ENCODE measurements at regions of chr22 and their contacts with region 1.

Region 1: DNA sequence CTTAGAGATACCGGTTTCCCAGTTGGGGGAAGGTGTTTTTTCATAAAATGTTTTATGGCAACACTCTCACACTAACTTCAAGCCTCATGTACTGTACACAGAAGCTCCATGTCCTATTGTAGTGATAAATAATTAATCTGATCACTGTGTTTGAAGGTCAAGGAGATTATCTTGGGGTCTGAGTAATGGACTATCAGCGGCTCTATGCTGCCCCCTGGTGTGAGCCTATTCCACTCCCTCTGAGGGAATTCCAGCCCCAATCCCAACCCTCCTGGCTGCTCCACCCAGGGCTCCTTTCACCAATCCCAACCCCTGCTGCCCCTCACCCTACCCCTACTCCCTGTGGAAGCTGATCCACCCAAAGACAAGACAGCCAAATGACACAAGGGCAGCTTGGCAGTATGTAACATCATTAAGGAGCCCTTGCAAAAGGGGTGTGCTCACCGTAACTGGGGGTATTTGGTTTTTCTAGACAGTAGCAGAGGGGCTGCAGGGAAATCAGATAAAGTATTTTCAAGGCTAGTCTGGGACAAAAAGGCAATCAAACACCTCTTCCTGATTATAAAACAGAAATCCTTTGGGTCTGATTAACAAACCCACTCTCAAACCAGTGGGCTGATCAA is 22.3 kb downstream of the HPS4 start:
- DNase-seq: peak; percentile 61
- ATAC-seq: no peak
- H3K4me3 ChIP-seq: no peak overlapping the region
- H3K4me3 Mint-ChIP-seq: no peak overlapping the region
- H3K27ac ChIP-seq: no peak overlapping the region
- H3K27ac Mint-ChIP-seq: no peak overlapping the region
- H3K4me1 ChIP-seq: no peaks in the 10 kb centered on the region
- H3K4me1 Mint-ChIP-seq: no peaks in the 10 kb centered on the region
- H3K27me3 ChIP-seq: no peaks in the 10 kb centered on the region
- H3K27me3 Mint-ChIP-seq: no peaks in the 10 kb centered on the region
- CTCF ChIP-seq: peak; percentile 81

Region 2: GRCh38 chr22:26377170-26377830 is 84.0 kb before region 1 on chr22:
- CTCF ChIA-PET with region 1: interaction called, 5 read pairs
- POLR2A ChIA-PET with region 1: no interaction called
- intact Hi-C with region 1: loop called (anchors 5 kb)
- DNase-seq: peak; percentile 24
- ATAC-seq: no peak
- H3K4me3 ChIP-seq: no peak overlapping the region
- H3K4me3 Mint-ChIP-seq: no peak overlapping the region
- H3K27ac ChIP-seq: no peak overlapping the region
- H3K27ac Mint-ChIP-seq: no peak overlapping the region
- H3K4me1 ChIP-seq: no peaks in the 10 kb centered on the region
- H3K4me1 Mint-ChIP-seq: peaks cover 4% of the 10 kb centered on the region
- H3K27me3 ChIP-seq: peaks cover 0 to 32% (median 19%) of the 10 kb centered on the region in 4 experiments
- H3K27me3 Mint-ChIP-seq: peaks cover 74% of the 10 kb centered on the region
- CTCF ChIP-seq: no peak

Region 3: DNA sequence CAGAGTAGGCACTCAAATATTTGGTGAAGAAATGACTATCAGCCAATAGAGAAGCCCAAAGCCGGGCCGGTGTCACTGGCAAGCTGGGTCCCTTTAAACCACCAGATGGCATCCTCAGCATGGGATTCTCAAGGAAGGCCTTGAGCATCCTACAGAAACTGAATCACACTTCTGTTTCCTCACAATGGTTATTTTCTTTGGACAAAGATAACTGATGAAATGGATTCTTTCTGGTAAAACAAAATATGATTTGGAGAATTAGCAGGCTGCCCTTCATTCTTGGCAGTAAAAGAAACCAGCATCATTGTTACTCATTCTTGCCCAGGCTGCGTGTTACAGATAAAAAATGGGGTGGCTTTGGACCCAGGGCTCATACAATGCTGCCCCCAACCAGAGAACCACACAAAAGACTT is 62.6 kb before region 1 on chr22:
- CTCF ChIA-PET with region 1: interaction called, 179 read pairs
- POLR2A ChIA-PET with region 1: no interaction called
- intact Hi-C with region 1: no loop called
- DNase-seq: peak; percentile 67
- ATAC-seq: peak; percentile 67
- H3K4me3 ChIP-seq: no peak overlapping the region
- H3K4me3 Mint-ChIP-seq: no peak overlapping the region
- H3K27ac ChIP-seq: no peak overlapping the region
- H3K27ac Mint-ChIP-seq: no peak overlapping the region
- H3K4me1 ChIP-seq: no peaks in the 10 kb centered on the region
- H3K4me1 Mint-ChIP-seq: no peaks in the 10 kb centered on the region
- H3K27me3 ChIP-seq: peaks cover 0 to 4% (median 0%) of the 10 kb centered on the region in 4 experiments
- H3K27me3 Mint-ChIP-seq: peaks cover 8% of the 10 kb centered on the region
- CTCF ChIP-seq: peak; percentile 76

Region 4: DNA sequence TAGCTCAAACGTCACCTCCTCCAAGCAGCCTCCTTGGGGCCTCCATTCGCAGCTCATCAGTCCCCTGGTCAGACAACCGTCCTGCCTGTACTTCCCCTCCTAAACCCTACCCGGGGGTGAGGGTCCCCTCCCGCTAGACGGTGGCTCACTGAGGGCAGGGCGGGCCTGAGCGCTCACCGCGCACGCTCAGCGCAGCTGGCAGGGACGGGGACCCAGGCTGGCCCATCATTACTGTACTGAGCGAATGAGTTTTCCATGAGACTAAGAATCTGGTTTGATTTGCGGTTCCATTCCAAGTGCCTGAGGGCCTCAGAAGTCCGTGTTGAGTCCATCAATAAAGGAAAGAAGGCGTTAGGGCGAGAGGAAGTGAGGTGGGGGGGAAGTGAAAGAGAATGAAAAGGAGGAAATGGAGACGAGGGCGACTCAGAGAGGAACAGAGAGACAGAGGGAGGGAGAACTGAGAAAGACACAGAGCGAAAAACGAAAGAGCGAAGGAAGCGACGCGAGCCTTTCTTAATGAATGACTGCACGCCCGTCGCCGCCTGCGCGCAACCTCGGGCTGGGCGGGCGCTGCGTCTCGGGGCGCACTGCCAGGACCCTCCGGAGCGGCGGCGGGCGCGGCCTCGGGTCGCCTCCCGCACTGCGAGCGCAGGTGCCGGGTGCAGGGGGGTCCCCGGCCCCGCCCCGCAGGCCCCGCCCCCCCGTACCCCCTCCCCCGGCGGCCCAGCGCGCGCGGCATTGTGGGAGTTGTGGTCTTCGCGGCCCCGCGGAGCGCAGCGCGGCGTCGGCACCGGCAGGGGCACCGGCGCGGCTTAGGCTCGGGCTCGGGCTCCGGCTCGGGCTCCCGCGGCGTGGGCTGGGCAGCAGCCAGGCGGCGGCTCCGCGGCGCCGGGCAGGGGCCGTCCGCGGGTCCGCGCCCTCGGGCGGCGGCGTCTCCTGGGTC is 32.5 kb before region 1 on chr22 and contains the start of gene ASPHD2:
- CTCF ChIA-PET with region 1: interaction called, 19 read pairs
- POLR2A ChIA-PET with region 1: no interaction called
- intact Hi-C with region 1: no loop called
- DNase-seq: peak; percentile 95
- ATAC-seq: peak; percentile 78
- H3K4me3 ChIP-seq: peak within 1 kb of the TSS; percentile 30 to 100 (median 82)
- H3K4me3 Mint-ChIP-seq: peak within 1 kb of the TSS; percentile 90
- H3K27ac ChIP-seq: peak within 1 kb of the TSS; percentile 88 to 98
- H3K27ac Mint-ChIP-seq: peak within 1 kb of the TSS; percentile 97
- H3K4me1 ChIP-seq: peaks cover 45 to 48% of the 10 kb centered on the region in 2 donors
- H3K4me1 Mint-ChIP-seq: peaks cover 55% of the 10 kb centered on the region
- H3K27me3 ChIP-seq: no peaks in the 10 kb centered on the region
- H3K27me3 Mint-ChIP-seq: no peaks in the 10 kb centered on the region
- CTCF ChIP-seq: no peak
- total RNA-seq, gene ASPHD2: 7.3 and 8.0 TPM in 2 replicates

Region 5: GRCh38 chr22:26483439-26484359 is 22.4 kb after region 1 on chr22 and contains the starts of genes HPS4 and SRRD:
- CTCF ChIA-PET with region 1: interaction called, 8 read pairs
- POLR2A ChIA-PET with region 1: interaction called, 7 read pairs
- intact Hi-C with region 1: loop called (anchors 2 kb)
- DNase-seq: peak; percentile 97
- ATAC-seq: peak; percentile 83
- H3K4me3 ChIP-seq: peak within 1 kb of the TSS; percentile 70 to 98 (median 83)
- H3K4me3 Mint-ChIP-seq: peak within 1 kb of the TSS; percentile 94
- H3K27ac ChIP-seq: peak within 1 kb of the TSS; percentile 90 to 98
- H3K27ac Mint-ChIP-seq: peak within 1 kb of the TSS; percentile 97
- H3K4me1 ChIP-seq: peaks cover 49 to 58% of the 10 kb centered on the region in 2 donors
- H3K4me1 Mint-ChIP-seq: peaks cover 69% of the 10 kb centered on the region
- H3K27me3 ChIP-seq: no peaks in the 10 kb centered on the region
- H3K27me3 Mint-ChIP-seq: no peaks in the 10 kb centered on the region
- CTCF ChIP-seq: no peak
- total RNA-seq, gene HPS4: 61.8 and 76.6 TPM in 2 replicates
- total RNA-seq, gene SRRD: 19.2 and 19.4 TPM in 2 replicates

Measured in B cell (primary cell).